ENCODE measurements at regions of chr14 and their contacts with region 1.

Region 1: DNA sequence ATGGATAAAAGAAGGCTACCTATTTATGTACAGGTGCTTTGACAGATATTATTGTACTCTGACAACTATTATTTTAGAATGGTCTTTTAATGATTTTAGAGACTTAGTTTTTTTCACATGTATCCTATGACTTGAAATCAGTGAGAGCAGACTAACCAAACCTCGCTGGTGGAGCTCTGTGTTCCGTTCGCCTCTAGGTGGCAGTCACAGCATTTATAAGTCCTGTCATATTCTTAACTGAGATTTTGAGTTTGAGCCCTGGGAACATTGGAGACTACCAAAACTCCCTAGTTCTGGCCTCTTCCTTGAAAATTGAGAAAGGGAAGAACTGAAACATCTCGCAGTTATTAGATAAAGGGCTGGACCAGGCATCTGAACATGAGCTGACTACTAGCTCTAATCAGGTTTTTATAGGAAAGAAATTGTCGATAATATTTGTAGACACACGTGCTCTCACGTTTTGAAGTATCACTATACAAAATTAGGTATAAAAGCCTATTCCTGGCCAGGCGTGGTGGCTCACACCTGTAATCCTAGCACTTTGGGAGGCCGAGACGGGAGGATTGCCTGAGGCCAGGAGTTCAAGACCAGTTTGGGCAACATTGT is 48.3 kb downstream of the TTLL5 start:
- DNase-seq: peak; percentile 65 to 76
- ATAC-seq: peak in 3 of 4 donors; percentile 33 to 64 (median 39)
- H3K4me3 ChIP-seq: no peak overlapping the region
- H3K27ac ChIP-seq: no peak overlapping the region
- H3K4me1 ChIP-seq: peaks cover 13% of the 10 kb centered on the region
- H3K27me3 ChIP-seq: no peaks in the 10 kb centered on the region
- CTCF ChIP-seq: peak; percentile 81

Region 2: DNA sequence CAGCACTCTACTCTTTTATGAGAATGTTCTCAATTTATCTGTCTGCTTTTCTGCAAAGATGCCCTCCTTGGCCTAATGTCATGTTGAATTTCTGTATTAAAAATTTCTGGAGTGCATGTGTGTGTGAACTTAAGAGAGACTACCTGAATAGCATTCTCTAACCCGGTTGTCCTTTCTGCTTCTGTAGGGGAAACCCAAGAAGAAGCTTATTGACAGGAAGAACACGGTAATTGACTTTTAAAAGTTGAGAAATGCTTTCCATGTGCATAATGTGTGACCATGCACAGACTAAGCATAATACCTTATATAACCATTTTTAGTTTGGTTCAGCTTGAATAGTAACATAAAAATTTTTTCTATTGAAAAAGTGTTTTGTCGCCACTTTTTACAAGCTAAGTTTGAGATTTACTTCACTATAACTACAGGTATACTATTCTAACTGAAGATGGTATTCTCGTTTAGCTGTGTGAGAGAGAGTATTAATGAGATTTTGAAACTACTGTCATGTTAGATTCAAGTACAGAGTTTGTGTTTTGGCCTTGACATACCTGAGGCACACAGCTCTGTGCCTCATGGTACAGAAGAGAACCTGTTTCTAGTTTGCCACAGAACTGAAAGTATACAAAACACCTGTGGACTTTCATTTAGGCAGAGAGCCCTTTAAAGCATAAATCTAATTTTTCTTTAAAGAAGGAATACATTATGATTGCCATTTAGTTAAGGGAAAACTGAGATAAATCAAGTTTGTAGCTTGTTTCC is 48.5 kb after region 1 on chr14:
- intact Hi-C with region 1: no loop called
- DNase-seq: no peak
- ATAC-seq: no peak
- H3K4me3 ChIP-seq: no peak overlapping the region
- H3K27ac ChIP-seq: no peak overlapping the region
- H3K4me1 ChIP-seq: no peaks in the 10 kb centered on the region
- H3K27me3 ChIP-seq: no peaks in the 10 kb centered on the region
- CTCF ChIP-seq: no peak

Region 3: DNA sequence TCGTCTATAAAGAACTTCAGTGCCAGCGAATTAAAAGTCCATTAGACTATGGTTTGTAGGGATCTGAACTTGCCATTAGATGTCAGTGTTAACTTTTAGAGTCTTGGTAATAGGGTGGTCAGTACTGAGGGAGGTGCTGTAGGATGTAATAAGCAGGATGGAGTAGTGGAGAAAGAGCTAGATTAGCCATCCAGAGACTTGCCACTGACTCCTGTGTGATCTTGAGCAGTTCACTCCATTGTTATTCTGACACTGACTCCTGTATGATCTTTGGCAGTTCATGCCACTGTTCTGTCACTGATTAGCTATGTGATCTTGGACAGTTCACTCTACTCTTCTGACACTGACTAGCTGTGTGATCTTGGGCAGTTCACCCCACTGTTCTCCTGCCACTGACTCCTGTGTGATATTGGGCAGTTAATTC is 85.3 kb after region 1 on chr14:
- intact Hi-C with region 1: loop called in 1 of 2 experiments (anchors 5 kb)
- DNase-seq: no peak
- ATAC-seq: peak; percentile 82 to 92 (median 86)
- H3K4me3 ChIP-seq: no peak overlapping the region
- H3K27ac ChIP-seq: no peak overlapping the region
- H3K4me1 ChIP-seq: no peaks in the 10 kb centered on the region
- H3K27me3 ChIP-seq: no peaks in the 10 kb centered on the region
- CTCF ChIP-seq: peak; percentile 50

Region 4: DNA sequence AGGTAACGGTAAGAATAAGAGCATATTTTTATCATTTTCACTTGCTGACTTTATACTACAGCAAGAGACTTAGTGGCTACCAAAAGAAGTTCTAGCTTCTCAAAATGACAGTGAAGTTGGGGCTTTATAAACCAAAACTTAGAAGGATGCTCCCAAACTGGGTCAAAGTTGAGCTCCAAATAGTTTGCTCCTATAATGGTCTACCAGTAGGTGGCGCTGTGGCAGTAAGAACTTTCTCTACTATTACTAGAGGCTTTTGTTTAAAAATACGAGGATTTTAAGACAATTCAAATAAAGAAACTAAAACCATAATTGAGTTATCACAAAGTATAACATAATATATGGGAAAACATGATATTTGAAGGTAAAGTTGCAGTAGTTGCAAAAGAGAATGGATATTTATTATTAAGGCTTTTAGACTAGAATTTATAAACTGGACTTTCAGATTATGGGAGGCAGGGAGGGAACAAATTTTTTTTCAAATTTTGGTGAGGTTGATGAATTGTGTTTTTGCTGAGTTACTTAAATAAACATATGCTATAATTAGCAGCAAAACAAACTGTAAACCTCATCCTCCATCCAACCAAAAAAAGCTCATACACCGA is 197.5 kb after region 1 on chr14:
- intact Hi-C with region 1: loop called (anchors 2 to 10 kb)
- DNase-seq: peak; percentile 35 to 65
- ATAC-seq: peak; percentile 53 to 81 (median 72)
- H3K4me3 ChIP-seq: no peak overlapping the region
- H3K27ac ChIP-seq: peak overlapping the region; percentile 58
- H3K4me1 ChIP-seq: peaks cover 41% of the 10 kb centered on the region
- H3K27me3 ChIP-seq: no peaks in the 10 kb centered on the region
- CTCF ChIP-seq: peak; percentile 94

Region 5: DNA sequence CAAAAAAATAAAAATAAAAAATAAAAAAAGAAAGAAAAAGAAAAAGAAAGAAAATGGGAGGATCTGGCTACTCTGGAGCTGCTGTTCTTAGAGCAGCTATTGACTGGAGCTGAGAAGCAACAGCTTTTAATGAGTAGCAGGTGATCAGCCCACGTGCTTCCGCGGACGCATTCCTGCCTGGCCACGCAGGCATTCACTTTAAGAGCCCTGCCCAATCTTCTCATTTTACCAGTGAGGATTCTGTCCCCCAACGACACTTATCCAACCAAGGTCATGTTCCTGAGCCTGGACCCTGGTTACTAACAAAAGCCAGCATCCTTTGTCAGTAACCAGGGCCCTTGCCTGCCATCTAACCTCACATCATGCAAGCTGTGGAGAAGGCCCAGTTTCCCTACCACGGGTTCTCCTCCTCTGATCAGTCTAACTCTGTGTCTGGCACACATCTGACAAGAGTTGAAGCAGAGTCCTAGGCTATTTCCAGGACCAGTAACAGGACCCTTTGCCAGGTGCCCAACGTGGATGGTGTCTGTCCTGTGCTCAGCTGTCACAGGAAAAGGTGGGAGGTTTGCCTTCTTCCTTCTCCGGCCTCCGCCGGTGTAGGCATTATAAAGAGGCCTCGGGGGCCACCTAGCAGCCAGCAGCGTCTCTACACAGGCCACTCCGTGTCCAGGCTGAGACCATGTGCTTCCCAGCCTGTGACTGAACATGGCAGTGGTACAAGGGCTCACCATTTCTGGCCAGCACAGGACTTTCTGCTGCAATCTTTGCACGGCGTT is 381.5 kb after region 1 on chr14:
- intact Hi-C with region 1: loop called in 1 of 2 experiments (anchors 10 kb)
- DNase-seq: peak; percentile 70 to 89
- ATAC-seq: peak; percentile 88 to 93 (median 90)
- H3K4me3 ChIP-seq: no peak overlapping the region
- H3K27ac ChIP-seq: peak overlapping the region; percentile 91
- H3K4me1 ChIP-seq: peaks cover 57% of the 10 kb centered on the region
- H3K27me3 ChIP-seq: no peaks in the 10 kb centered on the region
- CTCF ChIP-seq: peak; percentile 64

Region 6: GRCh38 chr14:76352639-76353281 is 643.5 kb after region 1 on chr14:
- intact Hi-C with region 1: loop called in 1 of 2 experiments (anchors 10 kb)
- DNase-seq: peak; percentile 64 to 76
- ATAC-seq: peak; percentile 71 to 87 (median 82)
- H3K4me3 ChIP-seq: peak overlapping the region; percentile 49
- H3K27ac ChIP-seq: no peak overlapping the region
- H3K4me1 ChIP-seq: peaks cover 4% of the 10 kb centered on the region
- H3K27me3 ChIP-seq: no peaks in the 10 kb centered on the region
- CTCF ChIP-seq: peak; percentile 88

Region 7: DNA sequence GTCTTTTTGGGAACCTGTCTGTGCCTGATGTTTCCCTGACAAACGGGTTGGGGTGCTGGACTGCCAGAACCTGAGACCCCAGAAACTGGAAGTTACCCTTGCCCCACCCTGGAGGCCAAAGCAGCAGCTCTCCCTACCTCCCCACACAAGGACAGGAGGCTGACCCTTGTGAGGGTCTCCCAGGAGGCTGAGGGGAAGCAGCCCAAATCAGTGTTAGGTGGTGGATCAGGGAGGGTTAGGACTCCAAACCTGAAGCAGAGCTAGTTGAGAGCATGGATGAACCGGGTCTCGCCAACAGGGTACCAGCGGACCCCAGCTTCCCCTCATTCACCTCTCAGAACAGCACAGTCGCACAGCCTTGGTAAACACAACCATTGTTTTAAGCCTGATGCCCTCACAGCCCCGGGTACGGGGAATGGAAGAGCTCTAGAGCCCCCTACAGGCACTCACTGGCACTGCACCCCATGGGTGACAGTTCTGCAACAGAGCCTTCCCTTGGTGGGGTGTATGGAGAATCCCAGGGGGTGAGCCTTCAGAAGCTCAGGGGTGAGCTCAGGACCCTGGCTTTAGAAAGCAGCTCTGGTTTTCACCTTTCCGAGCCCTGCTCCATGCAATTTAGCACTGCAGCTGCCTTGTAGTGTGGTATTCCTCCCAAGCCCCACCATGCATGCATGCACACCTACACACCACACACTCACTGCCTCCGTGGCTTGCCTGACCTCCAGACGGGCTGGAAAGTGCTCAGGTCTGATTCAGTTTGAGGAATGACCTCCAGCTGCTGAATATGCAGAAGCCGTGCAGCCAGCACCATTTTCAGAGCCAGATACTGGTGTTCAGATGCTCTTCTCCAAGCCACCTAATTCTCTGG is 677.8 kb after region 1 on chr14:
- intact Hi-C with region 1: loop called in 1 of 2 experiments (anchors 10 kb)
- DNase-seq: peak; percentile 65 to 70
- ATAC-seq: peak; percentile 88 to 95 (median 92)
- H3K4me3 ChIP-seq: no peak overlapping the region
- H3K27ac ChIP-seq: no peak overlapping the region
- H3K4me1 ChIP-seq: no peaks in the 10 kb centered on the region
- H3K27me3 ChIP-seq: peaks cover 0 to 3% (median 0%) of the 10 kb centered on the region in 3 donors
- CTCF ChIP-seq: peak; percentile 97